ENCODE measurements at regions of chr1 and their contacts with region 1.

Region 1: DNA sequence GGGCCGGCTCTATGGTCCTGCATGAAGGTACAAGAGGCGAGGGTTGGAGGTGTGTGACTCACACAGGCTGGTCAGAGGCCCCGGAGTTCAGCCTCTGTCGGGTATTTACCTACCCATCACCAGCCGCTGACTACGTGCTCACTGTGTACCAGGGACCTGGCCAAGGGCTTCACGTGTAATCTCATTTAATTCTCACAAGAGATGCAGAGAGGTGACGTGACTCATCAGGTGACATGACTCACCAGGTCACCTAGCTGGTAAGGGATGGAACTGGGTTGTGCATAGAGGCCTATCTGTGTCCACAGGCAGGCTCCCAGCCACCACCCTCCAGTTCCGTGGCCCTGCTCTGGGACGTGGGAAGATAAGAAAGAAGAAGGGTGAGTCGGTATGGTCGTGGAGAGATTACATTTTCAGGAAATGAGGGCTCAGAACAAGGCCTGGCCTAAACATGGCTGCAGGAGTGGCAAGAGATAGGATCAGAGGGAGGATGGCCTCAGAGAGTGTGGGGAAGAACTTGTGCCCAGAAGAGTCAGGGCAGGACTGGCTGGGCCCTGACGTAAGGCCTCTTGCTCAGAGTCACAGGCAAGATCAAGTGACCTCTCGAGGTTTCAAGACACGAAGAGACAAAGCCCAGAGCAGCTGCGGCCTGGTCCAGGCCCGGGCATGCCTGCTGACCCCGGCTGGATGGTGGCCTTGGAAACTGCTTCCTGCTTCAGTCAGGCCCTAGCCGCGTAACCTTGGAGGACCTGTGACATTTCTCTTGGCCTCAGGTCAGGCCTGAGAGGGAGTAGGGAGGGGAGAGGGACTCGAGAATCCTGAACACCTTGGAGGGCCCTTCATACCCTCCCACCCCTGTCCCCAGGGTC is 52.7 kb upstream of the WASF2 start:
- DNase-seq: peak; percentile 45 to 77
- H3K4me3 ChIP-seq: no peak overlapping the region
- H3K4me3 Mint-ChIP-seq: no peak overlapping the region
- H3K27ac Mint-ChIP-seq: peak overlapping the region; percentile 31
- H3K4me1 ChIP-seq: peaks cover 15% of the 10 kb centered on the region
- H3K4me1 Mint-ChIP-seq: peaks cover 20% of the 10 kb centered on the region
- H3K27me3 ChIP-seq: no peaks in the 10 kb centered on the region
- H3K27me3 Mint-ChIP-seq: no peaks in the 10 kb centered on the region
- CTCF ChIP-seq: no peak

Region 2: GRCh38 chr1:27498767-27499541 is 43.7 kb before region 1 on chr1:
- CTCF ChIA-PET with region 1: interaction called, 10 read pairs
- POLR2A ChIA-PET with region 1: no interaction called
- intact Hi-C with region 1: no loop called
- DNase-seq: no peak
- H3K4me3 ChIP-seq: no peak overlapping the region
- H3K4me3 Mint-ChIP-seq: no peak overlapping the region
- H3K27ac Mint-ChIP-seq: no peak overlapping the region
- H3K4me1 ChIP-seq: peaks cover 10% of the 10 kb centered on the region
- H3K4me1 Mint-ChIP-seq: peaks cover 17% of the 10 kb centered on the region
- H3K27me3 ChIP-seq: no peaks in the 10 kb centered on the region
- H3K27me3 Mint-ChIP-seq: no peaks in the 10 kb centered on the region
- CTCF ChIP-seq: no peak

Region 3: GRCh38 chr1:27662707-27663393 is 120.2 kb after region 1 on chr1:
- CTCF ChIA-PET with region 1: no interaction called
- POLR2A ChIA-PET with region 1: no interaction called
- intact Hi-C with region 1: no loop called
- DNase-seq: peak; percentile 70 to 84
- H3K4me3 ChIP-seq: no peak overlapping the region
- H3K4me3 Mint-ChIP-seq: no peak overlapping the region
- H3K27ac Mint-ChIP-seq: peak overlapping the region; percentile 42
- H3K4me1 ChIP-seq: peaks cover 10% of the 10 kb centered on the region
- H3K4me1 Mint-ChIP-seq: peaks cover 15% of the 10 kb centered on the region
- H3K27me3 ChIP-seq: no peaks in the 10 kb centered on the region
- H3K27me3 Mint-ChIP-seq: no peaks in the 10 kb centered on the region
- CTCF ChIP-seq: peak; percentile 72 to 75